Gastrocnemius medialis (tissue), 4 donors: ENCODE measurements at regions of chr19 and their contacts with region 1.

Region 1: DNA sequence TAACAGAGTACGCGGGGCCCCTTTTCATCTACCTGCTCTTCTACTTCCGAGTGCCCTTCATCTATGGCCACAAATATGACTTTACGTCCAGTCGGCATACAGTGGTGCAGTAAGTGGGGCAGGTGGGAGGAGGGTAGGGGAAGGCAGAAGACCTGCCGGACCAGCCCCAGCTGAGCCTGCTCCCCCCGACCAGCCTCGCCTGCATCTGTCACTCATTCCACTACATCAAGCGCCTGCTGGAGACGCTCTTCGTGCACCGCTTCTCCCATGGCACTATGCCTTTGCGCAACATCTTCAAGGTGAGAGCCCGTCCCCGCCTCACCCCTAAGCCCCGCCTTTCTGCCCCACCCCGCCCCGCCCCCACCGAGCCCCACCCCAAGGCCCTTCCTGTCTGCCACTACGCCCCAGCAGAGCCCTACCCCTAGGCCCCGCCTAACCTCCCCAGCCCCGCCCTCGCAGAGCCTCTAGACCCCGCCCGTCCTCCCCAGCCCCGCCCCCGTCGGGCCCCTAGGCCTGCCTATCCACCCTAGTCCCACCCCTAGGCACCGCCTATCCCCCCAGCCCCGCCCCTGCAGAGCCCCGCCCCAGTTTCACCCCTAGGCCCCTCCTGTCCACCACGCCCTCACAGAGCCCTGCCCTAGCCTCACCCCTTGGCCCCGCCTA is 7.7 kb downstream of the NDUFB7 start:
- DNase-seq: peak; percentile 80 to 91
- ATAC-seq: peak; percentile 16 to 39
- H3K4me3 ChIP-seq: peak overlapping the region in 3 of 4 donors; percentile 6 to 48 (median 33)
- H3K27ac ChIP-seq: peak overlapping the region; percentile 98 to 100 (median 99)
- H3K4me1 ChIP-seq: peaks cover 48 to 50% of the 10 kb centered on the region in 2 donors
- H3K27me3 ChIP-seq: no peaks in the 10 kb centered on the region
- CTCF ChIP-seq: no peak
- POLR2A ChIP-seq: peak; percentile 14 to 17

Region 2: GRCh38 chr19:13150187-13150930 is 1413.8 kb before region 1 on chr19 and contains the starts of genes IER2 and STX10:
- in situ Hi-C with region 1: no loop called
- intact Hi-C with region 1: loop called (anchors 5 kb)
- DNase-seq: peak; percentile 93 to 94
- ATAC-seq: peak; percentile 67 to 68
- H3K4me3 ChIP-seq: peak within 1 kb of the TSS; percentile 86 to 93 (median 91)
- H3K27ac ChIP-seq: peak within 1 kb of the TSS; percentile 96 to 99 (median 98)
- H3K4me1 ChIP-seq: peaks cover 26 to 32% of the 10 kb centered on the region in 2 donors
- H3K27me3 ChIP-seq: peaks cover 0 to 18% (median 7%) of the 10 kb centered on the region in 3 donors
- CTCF ChIP-seq: peak; percentile 38 to 74 (median 68)
- POLR2A ChIP-seq: peak; percentile 84
- total RNA-seq, gene IER2: 15.4 to 19.1 (median 16.7) TPM
- total RNA-seq, gene STX10: 16.5 to 40.7 (median 33.4) TPM

Region 3: GRCh38 chr19:14006243-14006765 is 557.8 kb before region 1 on chr19 and contains the start of gene RFX1:
- in situ Hi-C with region 1: no loop called
- intact Hi-C with region 1: loop called (anchors 5 kb)
- DNase-seq: peak; percentile 99 to 100
- ATAC-seq: peak; percentile 82 to 85
- H3K4me3 ChIP-seq: peak within 1 kb of the TSS; percentile 84 to 97 (median 92)
- H3K27ac ChIP-seq: peak within 1 kb of the TSS; percentile 96 to 100 (median 99)
- H3K4me1 ChIP-seq: peaks cover 34 to 45% of the 10 kb centered on the region in 2 donors
- H3K27me3 ChIP-seq: no peaks in the 10 kb centered on the region
- CTCF ChIP-seq: peak in 1 of 5 experiments; percentile 41
- POLR2A ChIP-seq: no peak
- total RNA-seq, gene RFX1: 2.7 to 7.2 (median 4.4) TPM

Region 4: GRCh38 chr19:14432791-14433553 is 131.1 kb before region 1 on chr19 and contains the start of gene PKN1:
- in situ Hi-C with region 1: no loop called
- intact Hi-C with region 1: loop called (anchors 5 kb)
- DNase-seq: no peak
- ATAC-seq: peak; percentile 73 to 82
- H3K4me3 ChIP-seq: peak within 1 kb of the TSS; percentile 75 to 87 (median 84)
- H3K27ac ChIP-seq: peak within 1 kb of the TSS; percentile 73 to 81 (median 76)
- H3K4me1 ChIP-seq: peaks cover 16 to 17% of the 10 kb centered on the region in 2 donors
- H3K27me3 ChIP-seq: peaks cover 0 to 6% (median 0%) of the 10 kb centered on the region in 3 donors
- CTCF ChIP-seq: no peak
- POLR2A ChIP-seq: peak in 1 of 2 donors; percentile 20
- total RNA-seq, gene PKN1: 52.1 to 130 (median 81.3) TPM

Region 5: GRCh38 chr19:14517840-14518505 is 46.1 kb before region 1 on chr19 and contains the start of gene DNAJB1:
- in situ Hi-C with region 1: loop called in 1 of 4 experiments (anchors 10 kb)
- intact Hi-C with region 1: no loop called
- DNase-seq: peak; percentile 76 to 81
- ATAC-seq: peak; percentile 79 to 81
- H3K4me3 ChIP-seq: peak within 1 kb of the TSS; percentile 68 to 99 (median 88)
- H3K27ac ChIP-seq: peak within 1 kb of the TSS; percentile 96 to 100 (median 100)
- H3K4me1 ChIP-seq: peaks cover 31 to 33% of the 10 kb centered on the region in 2 donors
- H3K27me3 ChIP-seq: no peaks in the 10 kb centered on the region
- CTCF ChIP-seq: no peak
- POLR2A ChIP-seq: peak; percentile 95 to 100
- total RNA-seq, gene DNAJB1: 12.3 to 27.3 (median 16.6) TPM

Region 6: GRCh38 chr19:15125232-15126067 is 561.3 kb after region 1 on chr19:
- in situ Hi-C with region 1: no loop called
- intact Hi-C with region 1: loop called (anchors 10 kb)
- DNase-seq: peak; percentile 95 to 98
- ATAC-seq: peak; percentile 94 to 95
- H3K4me3 ChIP-seq: peak overlapping the region; percentile 78 to 85 (median 84)
- H3K27ac ChIP-seq: peak overlapping the region; percentile 89 to 95 (median 93)
- H3K4me1 ChIP-seq: peaks cover 13 to 15% of the 10 kb centered on the region in 2 donors
- H3K27me3 ChIP-seq: no peaks in the 10 kb centered on the region
- CTCF ChIP-seq: peak in 2 of 5 experiments; percentile 35 to 48
- POLR2A ChIP-seq: peak; percentile 40 to 42